ENCODE measurements at regions of chr1 and their contacts with region 1.

Region 1: DNA sequence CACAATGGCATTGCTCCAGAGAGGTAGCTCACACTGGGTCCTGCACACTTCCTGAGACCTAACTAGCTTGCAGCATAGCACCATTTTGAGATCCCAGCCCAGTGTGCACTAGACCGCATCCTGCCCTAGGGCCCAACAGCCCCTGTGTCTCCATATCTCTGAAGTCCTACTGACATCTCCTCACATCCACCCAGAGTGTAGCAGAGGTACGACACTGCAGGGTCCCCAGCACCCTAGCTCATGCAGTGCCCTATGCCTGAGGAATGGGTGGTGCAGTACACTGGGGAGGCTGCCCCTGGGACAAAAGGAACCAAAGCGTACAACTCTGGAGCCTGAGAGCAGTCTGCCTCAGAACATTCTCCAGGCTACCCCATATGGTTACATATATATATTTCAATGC is 111.4 kb upstream of the DEPDC1 start:
- DNase-seq: no peak
- ATAC-seq: no peak
- H3K4me3 ChIP-seq: no peak overlapping the region
- H3K27ac ChIP-seq: no peak overlapping the region
- H3K4me1 ChIP-seq: no peaks in the 10 kb centered on the region
- H3K27me3 ChIP-seq: no peaks in the 10 kb centered on the region
- CTCF ChIP-seq: no peak
- POLR2A ChIP-seq: no peak
- RAD21 ChIP-seq: no peak

Region 2: DNA sequence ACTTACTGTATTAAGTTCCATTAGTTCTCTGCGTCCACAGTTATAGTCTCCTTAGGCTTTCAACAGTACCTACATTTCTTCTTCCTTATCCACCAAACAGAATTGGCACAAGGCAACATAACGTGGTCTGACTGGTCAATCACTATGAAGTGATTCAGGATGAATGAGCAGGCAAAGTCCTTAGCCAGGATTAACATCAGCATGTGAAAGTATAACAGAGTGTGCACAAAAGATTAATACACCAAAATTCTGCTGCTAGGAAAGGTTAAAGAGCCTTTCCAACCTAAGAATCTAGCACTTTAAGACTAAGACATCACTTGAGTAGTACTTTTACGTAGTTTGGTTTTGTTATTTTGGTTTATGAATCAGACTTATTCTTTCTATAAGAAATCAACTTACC is 127.2 kb before region 1 on chr1:
- CTCF ChIA-PET with region 1: no interaction called
- POLR2A ChIA-PET with region 1: no interaction called
- dilution Hi-C with region 1: no loop called
- in situ Hi-C with region 1: no loop called
- intact Hi-C with region 1: no loop called
- DNase-seq: peak; percentile 23
- ATAC-seq: no peak
- H3K4me3 ChIP-seq: no peak overlapping the region
- H3K27ac ChIP-seq: no peak overlapping the region
- H3K4me1 ChIP-seq: peaks cover 2% of the 10 kb centered on the region; the same call in 1 of the 2 replicates
- H3K27me3 ChIP-seq: no peaks in the 10 kb centered on the region
- CTCF ChIP-seq: no peak
- POLR2A ChIP-seq: no peak
- RAD21 ChIP-seq: no peak

Region 3: GRCh38 chr1:68644521-68644920 is 36.2 kb after region 1 on chr1:
- CTCF ChIA-PET with region 1: no interaction called
- POLR2A ChIA-PET with region 1: interaction called, 10 read pairs
- dilution Hi-C with region 1: no loop called
- in situ Hi-C with region 1: no loop called
- intact Hi-C with region 1: no loop called
- DNase-seq: no peak
- ATAC-seq: no peak
- H3K4me3 ChIP-seq: no peak overlapping the region
- H3K27ac ChIP-seq: no peak overlapping the region
- H3K4me1 ChIP-seq: no peaks in the 10 kb centered on the region
- H3K27me3 ChIP-seq: no peaks in the 10 kb centered on the region
- CTCF ChIP-seq: no peak
- POLR2A ChIP-seq: no peak
- RAD21 ChIP-seq: no peak

Region 4: GRCh38 chr1:69090752-69091151 is 482.5 kb after region 1 on chr1:
- CTCF ChIA-PET with region 1: no interaction called
- POLR2A ChIA-PET with region 1: no interaction called
- dilution Hi-C with region 1: no loop called
- in situ Hi-C with region 1: no loop called
- intact Hi-C with region 1: no loop called
- DNase-seq: no peak
- ATAC-seq: no peak
- H3K4me3 ChIP-seq: no peak overlapping the region
- H3K27ac ChIP-seq: no peak overlapping the region
- H3K4me1 ChIP-seq: no peaks in the 10 kb centered on the region
- H3K27me3 ChIP-seq: no peaks in the 10 kb centered on the region
- CTCF ChIP-seq: no peak
- POLR2A ChIP-seq: no peak
- RAD21 ChIP-seq: no peak

Measured in IMR-90 (cell line).